HCT116 (cell line): ENCODE measurements at regions of chr5 and their contacts with region 1.

Region 1: GRCh38 chr5:36690041-36690961 is 83.9 kb downstream of the SLC1A3 start:
- DNase-seq: peak; percentile 81
- ATAC-seq: peak; percentile 86
- H3K4me3 ChIP-seq: peak overlapping the region; percentile 39 to 52
- H3K27ac ChIP-seq: peak overlapping the region; percentile 29
- H3K4me1 ChIP-seq: peaks cover 8 to 19% of the 10 kb centered on the region in 2 experiments; a peak in 2 of 4 replicates
- H3K27me3 ChIP-seq: no peaks in the 10 kb centered on the region
- CTCF ChIP-seq: peak; percentile 60 to 91 (median 90)
- POLR2A ChIP-seq: no peak
- RAD21 ChIP-seq: peak; percentile 46

Region 2: DNA sequence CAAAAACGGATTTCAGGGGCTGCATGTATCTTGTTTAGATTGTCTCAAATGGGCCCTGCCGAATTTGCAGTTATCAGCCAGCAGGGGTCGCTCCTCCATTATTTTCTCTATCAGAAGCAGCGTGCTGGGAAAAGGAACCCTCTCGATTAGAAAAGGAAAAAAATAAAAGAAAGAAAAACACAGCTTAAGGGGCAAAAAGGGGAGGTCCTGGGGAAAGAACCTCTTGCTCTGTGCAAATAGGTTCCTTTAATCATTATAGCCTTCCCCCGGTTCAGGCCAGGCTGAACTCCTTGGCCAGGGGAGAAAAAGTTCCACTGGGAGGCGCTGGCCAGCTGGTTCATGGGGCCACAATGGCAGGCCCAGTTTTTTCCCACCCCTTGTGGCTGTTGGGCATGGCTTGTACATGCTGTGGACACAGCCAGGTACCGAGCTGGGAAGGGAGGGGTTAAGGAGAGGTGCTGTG is 726.9 kb before region 1 on chr5:
- CTCF ChIA-PET with region 1: no interaction called
- POLR2A ChIA-PET with region 1: no interaction called
- RAD21 ChIA-PET with region 1: no interaction called
- intact Hi-C with region 1: loop called (anchors 5 kb)
- DNase-seq: no peak
- ATAC-seq: peak; percentile 84
- H3K4me3 ChIP-seq: no peak overlapping the region
- H3K27ac ChIP-seq: no peak overlapping the region
- H3K4me1 ChIP-seq: no peaks in the 10 kb centered on the region
- H3K27me3 ChIP-seq: peaks cover 23% of the 10 kb centered on the region
- CTCF ChIP-seq: peak; percentile 62 to 88 (median 75)
- POLR2A ChIP-seq: no peak
- RAD21 ChIP-seq: peak; percentile 53

Region 3: DNA sequence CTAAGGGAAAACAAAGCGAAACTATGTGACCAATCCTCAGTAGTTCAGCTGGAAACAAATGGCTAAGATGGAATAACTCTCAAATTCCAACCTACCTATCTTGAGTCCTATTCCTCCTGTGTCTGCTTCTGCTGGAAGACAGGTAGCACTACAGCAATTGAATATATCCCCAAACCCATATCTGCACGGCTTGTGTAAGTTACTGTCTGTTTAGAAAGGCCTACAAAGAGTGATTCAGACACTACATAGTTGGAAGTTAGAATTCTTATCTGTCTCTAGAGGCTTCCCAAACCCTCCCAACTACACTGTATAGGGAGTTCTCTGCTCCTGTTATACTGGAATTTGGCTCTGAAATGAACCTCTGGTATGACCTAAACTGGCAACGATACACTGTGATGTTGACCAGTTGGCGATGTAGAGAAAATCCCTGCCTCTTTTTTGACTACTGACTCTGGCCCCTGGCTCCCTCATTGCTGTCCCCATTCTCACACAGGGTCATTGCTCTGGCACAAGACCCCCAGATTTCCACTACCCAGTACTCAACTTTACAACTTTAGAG is 426.0 kb before region 1 on chr5:
- CTCF ChIA-PET with region 1: interaction called, 4 read pairs
- POLR2A ChIA-PET with region 1: no interaction called
- RAD21 ChIA-PET with region 1: no interaction called
- intact Hi-C with region 1: loop called (anchors 2 kb)
- DNase-seq: no peak
- ATAC-seq: no peak
- H3K4me3 ChIP-seq: no peak overlapping the region
- H3K27ac ChIP-seq: no peak overlapping the region
- H3K4me1 ChIP-seq: no peaks in the 10 kb centered on the region
- H3K27me3 ChIP-seq: no peaks in the 10 kb centered on the region
- CTCF ChIP-seq: no peak
- POLR2A ChIP-seq: no peak
- RAD21 ChIP-seq: no peak

Region 4: GRCh38 chr5:36414869-36415282 is 275.4 kb before region 1 on chr5:
- CTCF ChIA-PET with region 1: interaction called, 52 read pairs
- POLR2A ChIA-PET with region 1: interaction called, 3 read pairs
- RAD21 ChIA-PET with region 1: interaction called, 3 to 6 read pairs
- intact Hi-C with region 1: loop called (anchors 1 kb)
- DNase-seq: peak; percentile 37
- ATAC-seq: peak; percentile 73
- H3K4me3 ChIP-seq: no peak overlapping the region
- H3K27ac ChIP-seq: no peak overlapping the region
- H3K4me1 ChIP-seq: peaks cover 0 to 10% of the 10 kb centered on the region in 2 experiments; a peak in 1 of 4 replicates
- H3K27me3 ChIP-seq: no peaks in the 10 kb centered on the region
- CTCF ChIP-seq: peak; percentile 21 to 81 (median 61); a peak in 4 of 6 replicates
- POLR2A ChIP-seq: no peak
- RAD21 ChIP-seq: peak; percentile 81

Region 5: DNA sequence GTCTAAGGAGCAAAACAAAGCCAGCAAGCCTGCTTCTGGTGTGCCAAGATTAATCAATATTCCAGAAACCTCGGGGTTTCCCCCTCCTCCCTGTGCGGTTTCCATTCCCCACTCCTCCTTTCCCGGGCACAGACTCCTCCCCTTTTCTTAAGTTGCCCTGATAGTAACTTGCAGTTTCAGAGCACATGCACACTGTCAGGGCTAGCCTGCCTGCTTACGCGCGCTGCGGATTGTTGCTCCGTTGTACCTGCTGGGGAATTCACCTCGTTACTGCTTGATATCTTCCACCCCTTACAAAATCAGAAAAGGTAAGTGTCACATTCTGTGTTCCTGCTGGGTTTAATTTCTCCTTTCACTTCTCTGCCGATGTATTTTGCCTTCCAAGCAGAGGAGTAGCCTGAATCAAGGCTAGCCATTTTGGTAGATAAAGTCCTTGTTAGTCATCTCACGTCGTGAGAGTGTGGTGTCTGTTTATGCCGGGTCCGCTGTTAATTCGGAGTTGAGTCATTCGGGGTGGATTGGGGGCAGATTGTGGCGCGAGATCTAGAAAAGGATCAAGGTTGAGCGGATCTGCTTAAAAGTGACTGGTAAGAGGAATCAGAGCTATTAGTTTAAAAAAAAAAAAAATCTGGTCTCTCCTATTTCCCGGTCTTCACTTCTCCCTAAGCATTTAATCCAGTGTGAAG is 83.7 kb before region 1 on chr5 and contains the start of gene SLC1A3:
- CTCF ChIA-PET with region 1: interaction called, 10 read pairs
- POLR2A ChIA-PET with region 1: interaction called, 4 read pairs
- RAD21 ChIA-PET with region 1: no interaction called
- intact Hi-C with region 1: loop called (anchors 2 kb)
- DNase-seq: peak; percentile 74
- ATAC-seq: peak; percentile 93
- H3K4me3 ChIP-seq: peak within 1 kb of the TSS; percentile 69
- H3K27ac ChIP-seq: peak within 1 kb of the TSS; percentile 67
- H3K4me1 ChIP-seq: peaks cover 8 to 27% of the 10 kb centered on the region in 2 experiments; a peak in 3 of 4 replicates
- H3K27me3 ChIP-seq: peaks cover 3% of the 10 kb centered on the region; the same call in 1 of the 2 replicates
- CTCF ChIP-seq: no peak
- POLR2A ChIP-seq: peak; percentile 85
- RAD21 ChIP-seq: no peak
- total RNA-seq, gene SLC1A3: 12.9 TPM

Region 6: GRCh38 chr5:36701085-36701698 is 10.9 kb after region 1 on chr5:
- CTCF ChIA-PET with region 1: interaction called, 22 read pairs
- POLR2A ChIA-PET with region 1: no interaction called
- RAD21 ChIA-PET with region 1: no interaction called
- intact Hi-C with region 1: no loop called
- DNase-seq: no peak
- ATAC-seq: no peak
- H3K4me3 ChIP-seq: no peak overlapping the region
- H3K27ac ChIP-seq: no peak overlapping the region
- H3K4me1 ChIP-seq: peaks cover 0 to 3% of the 10 kb centered on the region in 2 experiments; a peak in 1 of 4 replicates
- H3K27me3 ChIP-seq: no peaks in the 10 kb centered on the region
- CTCF ChIP-seq: no peak
- POLR2A ChIP-seq: no peak
- RAD21 ChIP-seq: no peak

Region 7: GRCh38 chr5:36982146-36982545 is 291.8 kb after region 1 on chr5:
- CTCF ChIA-PET with region 1: no interaction called
- POLR2A ChIA-PET with region 1: no interaction called
- RAD21 ChIA-PET with region 1: no interaction called
- intact Hi-C with region 1: no loop called
- DNase-seq: no peak
- ATAC-seq: no peak
- H3K4me3 ChIP-seq: no peak overlapping the region
- H3K27ac ChIP-seq: no peak overlapping the region
- H3K4me1 ChIP-seq: no peaks in the 10 kb centered on the region
- H3K27me3 ChIP-seq: no peaks in the 10 kb centered on the region
- CTCF ChIP-seq: no peak
- POLR2A ChIP-seq: no peak
- RAD21 ChIP-seq: no peak